CD4-positive, alpha-beta T cell (primary cell): ENCODE measurements at regions of chr3 and their contacts with region 1.

Region 1: GRCh38 chr3:197801891-197802778 is 11.1 kb downstream of the LRCH3 start:
- DNase-seq: peak in 5 of 14 experiments; percentile 19 to 66 (median 52)
- ATAC-seq: peak; percentile 68
- H3K4me3 ChIP-seq: no peak overlapping the region
- H3K4me3 Mint-ChIP-seq: no peak overlapping the region
- H3K27ac ChIP-seq: peak overlapping the region in 1 of 2 donors; percentile 23
- H3K27ac Mint-ChIP-seq: peak overlapping the region; percentile 65
- H3K4me1 ChIP-seq: peaks cover 22% of the 10 kb centered on the region
- H3K4me1 Mint-ChIP-seq: peaks cover 59% of the 10 kb centered on the region
- H3K27me3 ChIP-seq: no peaks in the 10 kb centered on the region
- H3K27me3 Mint-ChIP-seq: no peaks in the 10 kb centered on the region
- CTCF ChIP-seq: peak; percentile 49

Region 2: GRCh38 chr3:197599089-197599765 is 202.9 kb before region 1 on chr3:
- CTCF ChIA-PET with region 1: no interaction called
- POLR2A ChIA-PET with region 1: no interaction called
- intact Hi-C with region 1: loop called in 1 of 2 experiments (anchors 2 kb)
- DNase-seq: peak; percentile 62 to 88 (median 70)
- ATAC-seq: peak; percentile 98
- H3K4me3 ChIP-seq: no peak overlapping the region
- H3K4me3 Mint-ChIP-seq: no peak overlapping the region
- H3K27ac ChIP-seq: no peak overlapping the region
- H3K27ac Mint-ChIP-seq: no peak overlapping the region
- H3K4me1 ChIP-seq: peaks cover 7% of the 10 kb centered on the region
- H3K4me1 Mint-ChIP-seq: peaks cover 6% of the 10 kb centered on the region
- H3K27me3 ChIP-seq: no peaks in the 10 kb centered on the region
- H3K27me3 Mint-ChIP-seq: no peaks in the 10 kb centered on the region
- CTCF ChIP-seq: peak; percentile 90

Region 3: DNA sequence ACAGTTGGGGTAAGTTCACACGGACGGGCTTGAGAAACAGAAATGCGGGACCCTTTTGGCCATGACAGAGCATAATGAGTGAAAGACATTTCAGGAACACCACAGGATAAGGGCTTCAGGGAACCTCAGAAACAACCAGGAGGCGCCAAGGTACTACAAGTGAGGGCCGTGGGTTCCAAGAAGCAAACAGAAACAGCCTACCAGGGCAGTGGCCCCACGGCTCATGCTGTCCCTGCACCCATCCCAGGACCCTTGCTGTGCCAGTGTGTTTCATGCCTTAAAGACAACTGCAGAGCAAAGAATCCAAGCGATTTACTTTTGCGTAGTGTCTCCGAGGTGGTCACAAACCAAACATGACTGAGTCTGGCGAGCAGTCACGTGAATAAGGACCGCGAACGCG is 119.4 kb before region 1 on chr3:
- CTCF ChIA-PET with region 1: no interaction called
- POLR2A ChIA-PET with region 1: no interaction called
- intact Hi-C with region 1: loop called in 1 of 2 experiments (anchors 10 kb)
- DNase-seq: peak in 1 of 14 experiments; percentile 14
- ATAC-seq: no peak
- H3K4me3 ChIP-seq: no peak overlapping the region
- H3K4me3 Mint-ChIP-seq: no peak overlapping the region
- H3K27ac ChIP-seq: no peak overlapping the region
- H3K27ac Mint-ChIP-seq: no peak overlapping the region
- H3K4me1 ChIP-seq: no peaks in the 10 kb centered on the region
- H3K4me1 Mint-ChIP-seq: no peaks in the 10 kb centered on the region
- H3K27me3 ChIP-seq: no peaks in the 10 kb centered on the region
- H3K27me3 Mint-ChIP-seq: no peaks in the 10 kb centered on the region
- CTCF ChIP-seq: no peak

Region 4: GRCh38 chr3:197791113-197791891 is 10.8 kb before region 1 on chr3 and contains the start of gene LRCH3:
- CTCF ChIA-PET with region 1: no interaction called
- POLR2A ChIA-PET with region 1: interaction called, 8 read pairs
- intact Hi-C with region 1: loop called in 1 of 2 experiments (anchors 1 kb)
- DNase-seq: peak; percentile 68 to 90 (median 77)
- ATAC-seq: peak; percentile 72
- H3K4me3 ChIP-seq: peak within 1 kb of the TSS; percentile 97
- H3K4me3 Mint-ChIP-seq: peak within 1 kb of the TSS; percentile 95
- H3K27ac ChIP-seq: peak within 1 kb of the TSS; percentile 92 to 97
- H3K27ac Mint-ChIP-seq: peak within 1 kb of the TSS; percentile 98
- H3K4me1 ChIP-seq: peaks cover 25% of the 10 kb centered on the region
- H3K4me1 Mint-ChIP-seq: peaks cover 57% of the 10 kb centered on the region
- H3K27me3 ChIP-seq: no peaks in the 10 kb centered on the region
- H3K27me3 Mint-ChIP-seq: no peaks in the 10 kb centered on the region
- CTCF ChIP-seq: no peak
- total RNA-seq, gene LRCH3: 31.5 to 37.6 TPM

Region 5: DNA sequence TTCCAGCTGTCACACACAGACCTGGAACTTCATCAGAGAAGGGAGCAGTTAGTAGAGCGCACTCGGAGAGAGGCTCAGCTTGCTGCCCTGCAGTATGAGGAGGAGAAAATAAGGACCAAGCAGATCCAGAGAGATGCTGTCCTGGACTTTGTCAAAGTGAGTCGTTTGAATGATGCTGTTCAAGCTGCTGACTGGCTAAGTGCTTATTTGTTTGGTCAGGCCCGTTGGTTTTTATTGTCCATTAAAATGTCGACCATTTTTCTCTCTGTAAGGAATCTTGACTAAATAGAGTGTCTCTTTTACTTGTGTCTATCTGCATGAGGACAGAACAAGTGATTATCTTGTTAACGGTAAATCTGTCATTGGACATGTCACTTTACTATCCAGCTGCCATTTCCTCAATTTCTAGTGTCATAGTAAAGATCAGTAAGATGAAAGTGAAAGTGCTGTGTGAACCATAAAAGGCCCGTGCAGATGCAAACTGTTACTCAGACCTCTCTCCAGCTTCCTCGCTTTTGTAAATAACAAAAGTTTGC is 45.8 kb after region 1 on chr3:
- CTCF ChIA-PET with region 1: no interaction called
- POLR2A ChIA-PET with region 1: no interaction called
- intact Hi-C with region 1: no loop called
- DNase-seq: peak in 9 of 14 experiments; percentile 1 to 78 (median 16)
- ATAC-seq: peak; percentile 89
- H3K4me3 ChIP-seq: peak overlapping the region; percentile 29
- H3K4me3 Mint-ChIP-seq: peak overlapping the region; percentile 82
- H3K27ac ChIP-seq: peak overlapping the region; percentile 32 to 52
- H3K27ac Mint-ChIP-seq: peak overlapping the region; percentile 77
- H3K4me1 ChIP-seq: peaks cover 4% of the 10 kb centered on the region
- H3K4me1 Mint-ChIP-seq: peaks cover 24% of the 10 kb centered on the region
- H3K27me3 ChIP-seq: no peaks in the 10 kb centered on the region
- H3K27me3 Mint-ChIP-seq: no peaks in the 10 kb centered on the region
- CTCF ChIP-seq: no peak